Lower leg skin (tissue), 4 donors: ENCODE measurements at regions of chr18 and their contacts with region 1.

Region 1: GRCh38 chr18:31321719-31322118 is 3.8 kb downstream of the DSG1 start:
- DNase-seq: no peak
- H3K4me3 ChIP-seq: no peak overlapping the region
- CTCF ChIP-seq: no peak
- POLR2A ChIP-seq: no peak

Region 2: GRCh38 chr18:31042437-31043181 is 279.1 kb before region 1 on chr18 and contains the start of gene DSC3:
- intact Hi-C with region 1: loop called (anchors 5 kb)
- DNase-seq: peak; percentile 74 to 92
- H3K4me3 ChIP-seq: peak within 1 kb of the TSS; percentile 46
- CTCF ChIP-seq: no peak
- POLR2A ChIP-seq: no peak
- total RNA-seq, gene DSC3: 661 to 1,000 (median 831) TPM